Naive thymus-derived CD4-positive, alpha-beta T cell (primary cell): ENCODE measurements at regions of chr1 and their contacts with region 1.

Region 1: DNA sequence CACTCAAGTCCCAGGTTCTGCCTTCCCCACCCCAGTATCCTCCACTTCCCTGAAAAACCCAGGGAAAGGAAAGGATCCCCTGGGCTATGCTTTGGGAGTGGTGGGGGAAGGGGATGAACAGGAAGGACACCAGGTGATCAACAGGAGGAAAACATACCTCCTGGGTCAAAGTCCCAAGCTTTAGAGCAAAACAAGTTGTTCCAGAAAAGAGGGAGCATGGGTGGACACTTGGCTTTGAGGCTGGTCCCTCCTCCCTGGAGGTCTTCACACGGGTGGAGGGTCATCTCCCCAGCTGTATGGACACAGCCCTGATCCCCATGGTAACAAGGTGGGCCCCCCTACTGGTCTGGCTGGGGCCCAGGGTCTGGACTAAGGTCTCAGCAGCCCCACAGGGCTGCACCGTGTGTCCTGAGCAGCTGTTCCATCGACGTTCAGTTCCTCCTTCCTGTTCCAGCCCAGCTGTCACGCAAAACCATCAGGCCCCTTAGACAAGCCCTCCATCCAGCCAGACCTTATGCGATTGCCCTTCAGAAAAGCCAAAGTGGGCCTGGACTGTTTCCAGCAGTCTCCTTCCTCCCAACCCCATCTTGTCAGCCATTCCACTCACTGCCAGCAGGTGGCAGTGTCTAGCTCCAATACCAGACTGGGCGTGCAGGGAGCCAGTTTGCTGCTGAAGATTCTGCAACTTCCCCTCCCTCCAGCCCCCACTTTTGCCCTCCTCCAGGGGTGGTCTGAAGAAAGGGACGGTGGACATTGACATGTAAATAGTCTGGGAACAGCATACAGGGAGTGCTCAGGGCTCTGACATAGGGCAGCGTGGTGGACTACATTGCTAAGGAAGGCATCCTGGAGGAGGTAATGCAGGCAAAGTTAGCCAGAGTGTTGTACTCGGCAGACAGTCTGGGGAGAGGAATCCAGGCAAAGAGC is 2.9 kb upstream of the PDZK1IP1 start:
- DNase-seq: peak; percentile 25 to 72 (median 53)
- ATAC-seq: peak; percentile 84
- H3K4me3 ChIP-seq: no peak overlapping the region
- H3K4me3 Mint-ChIP-seq: no peak overlapping the region
- H3K27ac ChIP-seq: no peak overlapping the region
- H3K27ac Mint-ChIP-seq: peak overlapping the region in 1 of 9 donors; percentile 48
- H3K4me1 ChIP-seq: no peaks in the 10 kb centered on the region
- H3K4me1 Mint-ChIP-seq: peaks cover 0 to 2% (median 0%) of the 10 kb centered on the region in 7 donors
- H3K27me3 ChIP-seq: no peaks in the 10 kb centered on the region
- H3K27me3 Mint-ChIP-seq: peaks cover 7 to 20% (median 9%) of the 10 kb centered on the region in 5 donors

Region 2: DNA sequence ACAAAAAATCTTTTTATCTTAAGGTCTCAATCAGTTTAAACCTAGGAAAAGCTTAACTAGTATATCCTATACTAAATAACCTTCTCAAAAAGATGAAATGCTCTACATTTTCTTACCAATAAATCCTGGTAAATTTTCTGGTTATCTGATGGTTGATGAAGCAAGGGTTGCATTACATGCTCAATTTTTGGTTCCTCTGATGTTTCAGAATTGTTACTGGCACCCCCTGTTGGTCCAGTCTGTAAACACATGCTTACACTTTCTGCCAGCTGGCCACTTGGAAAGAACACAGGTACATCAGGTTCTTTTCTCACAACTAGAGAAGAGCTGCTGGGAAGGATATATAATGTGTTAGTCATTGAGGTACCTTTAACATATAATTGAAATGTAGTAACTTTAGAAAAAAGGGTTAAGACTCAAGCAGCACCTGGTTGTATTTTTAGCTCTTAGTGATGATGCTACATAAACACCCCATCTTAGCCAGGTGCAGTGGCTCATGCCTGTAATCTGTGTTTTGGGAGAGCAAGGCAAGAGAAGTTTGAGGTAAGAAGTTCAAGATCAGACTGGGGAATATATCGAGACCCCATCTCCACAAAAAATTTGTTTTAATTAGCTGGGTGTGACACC is 70.2 kb after region 1 on chr1:
- CTCF ChIA-PET with region 1: interaction called, 6 read pairs
- POLR2A ChIA-PET with region 1: no interaction called
- intact Hi-C with region 1: loop called (anchors 1 to 2 kb)
- DNase-seq: peak in 6 of 9 donors; percentile 5 to 26 (median 16)
- ATAC-seq: peak; percentile 60
- H3K4me3 ChIP-seq: no peak overlapping the region
- H3K4me3 Mint-ChIP-seq: no peak overlapping the region
- H3K27ac ChIP-seq: no peak overlapping the region
- H3K27ac Mint-ChIP-seq: no peak overlapping the region
- H3K4me1 ChIP-seq: no peaks in the 10 kb centered on the region
- H3K4me1 Mint-ChIP-seq: no peaks in the 10 kb centered on the region
- H3K27me3 ChIP-seq: no peaks in the 10 kb centered on the region
- H3K27me3 Mint-ChIP-seq: no peaks in the 10 kb centered on the region

Region 3: GRCh38 chr1:47276850-47277249 is 84.1 kb after region 1 on chr1:
- CTCF ChIA-PET with region 1: no interaction called
- POLR2A ChIA-PET with region 1: no interaction called
- intact Hi-C with region 1: no loop called
- DNase-seq: no peak
- ATAC-seq: no peak
- H3K4me3 ChIP-seq: no peak overlapping the region
- H3K4me3 Mint-ChIP-seq: no peak overlapping the region
- H3K27ac ChIP-seq: no peak overlapping the region
- H3K27ac Mint-ChIP-seq: peak overlapping the region in 1 of 9 donors; percentile 30
- H3K4me1 ChIP-seq: no peaks in the 10 kb centered on the region
- H3K4me1 Mint-ChIP-seq: peaks cover 0 to 21% (median 0%) of the 10 kb centered on the region in 7 donors
- H3K27me3 ChIP-seq: no peaks in the 10 kb centered on the region
- H3K27me3 Mint-ChIP-seq: no peaks in the 10 kb centered on the region

Region 4: GRCh38 chr1:47399138-47399845 is 206.6 kb after region 1 on chr1:
- CTCF ChIA-PET with region 1: no interaction called
- POLR2A ChIA-PET with region 1: no interaction called
- intact Hi-C with region 1: no loop called
- DNase-seq: no peak
- ATAC-seq: no peak
- H3K4me3 ChIP-seq: no peak overlapping the region
- H3K4me3 Mint-ChIP-seq: no peak overlapping the region
- H3K27ac ChIP-seq: no peak overlapping the region
- H3K27ac Mint-ChIP-seq: no peak overlapping the region
- H3K4me1 ChIP-seq: no peaks in the 10 kb centered on the region
- H3K4me1 Mint-ChIP-seq: peaks cover 0 to 2% (median 0%) of the 10 kb centered on the region in 7 donors
- H3K27me3 ChIP-seq: no peaks in the 10 kb centered on the region
- H3K27me3 Mint-ChIP-seq: peaks cover 22 to 48% (median 24%) of the 10 kb centered on the region in 5 donors

Region 5: DNA sequence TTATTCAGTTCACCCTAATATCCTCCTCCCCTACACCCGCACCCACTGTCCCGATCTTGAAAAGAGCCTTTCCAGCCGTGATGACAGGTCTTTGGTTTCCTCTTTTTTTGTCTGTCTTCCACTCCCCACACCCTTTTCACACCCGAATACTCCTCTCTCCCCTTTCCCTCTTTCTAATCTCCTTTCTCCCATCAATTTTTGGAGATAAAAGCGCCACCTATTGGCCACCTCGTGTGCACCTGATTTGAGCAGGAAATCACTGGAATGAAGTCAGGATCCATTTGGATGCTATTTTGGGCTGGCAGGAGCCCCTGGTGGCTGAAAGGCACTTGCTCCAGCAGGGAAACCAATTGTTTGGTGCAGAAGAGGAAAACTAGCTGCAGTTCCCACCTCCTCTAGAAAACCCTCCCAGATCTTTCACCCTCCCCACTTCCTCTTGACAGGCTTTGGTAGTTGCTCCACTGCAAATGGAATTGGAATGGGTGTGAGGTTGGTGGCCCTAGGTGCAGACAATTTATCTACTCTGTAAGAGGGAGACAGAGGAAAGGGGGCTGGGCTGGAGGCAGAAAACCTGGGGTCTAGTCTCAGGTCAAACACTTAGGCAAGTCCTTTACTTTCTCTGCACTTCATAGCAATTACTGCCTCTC is 231.7 kb after region 1 on chr1:
- CTCF ChIA-PET with region 1: no interaction called
- POLR2A ChIA-PET with region 1: no interaction called
- intact Hi-C with region 1: loop called in 1 of 2 experiments (anchors 2 kb)
- DNase-seq: no peak
- ATAC-seq: no peak
- H3K4me3 ChIP-seq: no peak overlapping the region
- H3K4me3 Mint-ChIP-seq: no peak overlapping the region
- H3K27ac ChIP-seq: no peak overlapping the region
- H3K27ac Mint-ChIP-seq: no peak overlapping the region
- H3K4me1 ChIP-seq: no peaks in the 10 kb centered on the region
- H3K4me1 Mint-ChIP-seq: peaks cover 0 to 4% (median 0%) of the 10 kb centered on the region in 7 donors
- H3K27me3 ChIP-seq: peaks cover 0 to 4% of the 10 kb centered on the region in 2 donors
- H3K27me3 Mint-ChIP-seq: peaks cover 38 to 44% (median 42%) of the 10 kb centered on the region in 5 donors

Region 6: GRCh38 chr1:48596046-48596445 is 1403.3 kb after region 1 on chr1:
- CTCF ChIA-PET with region 1: no interaction called
- POLR2A ChIA-PET with region 1: no interaction called
- intact Hi-C with region 1: no loop called
- DNase-seq: no peak
- ATAC-seq: no peak
- H3K4me3 ChIP-seq: no peak overlapping the region
- H3K4me3 Mint-ChIP-seq: no peak overlapping the region
- H3K27ac ChIP-seq: no peak overlapping the region
- H3K27ac Mint-ChIP-seq: no peak overlapping the region
- H3K4me1 ChIP-seq: no peaks in the 10 kb centered on the region
- H3K4me1 Mint-ChIP-seq: no peaks in the 10 kb centered on the region
- H3K27me3 ChIP-seq: no peaks in the 10 kb centered on the region
- H3K27me3 Mint-ChIP-seq: peaks cover 0 to 7% (median 4%) of the 10 kb centered on the region in 5 donors